OCI-LY7 (cell line): ENCODE measurements at regions of chr3 and their contacts with region 1.

Region 1: GRCh38 chr3:50227390-50228183 is 8.4 kb upstream of the GNAI2 start:
- DNase-seq: peak; percentile 96
- H3K4me3 ChIP-seq: peak overlapping the region; percentile 90
- H3K27ac ChIP-seq: peak overlapping the region; percentile 60
- H3K4me1 ChIP-seq: peaks cover 45% of the 10 kb centered on the region
- CTCF ChIP-seq: peak; percentile 81

Region 2: GRCh38 chr3:49802719-49803464 is 424.7 kb before region 1 on chr3 and contains the start of gene INKA1:
- CTCF ChIA-PET with region 1: no interaction called
- POLR2A ChIA-PET with region 1: no interaction called
- intact Hi-C with region 1: loop called (anchors 10 kb)
- DNase-seq: peak; percentile 93
- H3K4me3 ChIP-seq: peak within 1 kb of the TSS; percentile 82
- H3K27ac ChIP-seq: peak within 1 kb of the TSS; percentile 96
- H3K4me1 ChIP-seq: peaks cover 46% of the 10 kb centered on the region
- CTCF ChIP-seq: peak; percentile 92
- total RNA-seq, gene INKA1: 12.8 and 18.4 TPM in 2 replicates

Region 3: GRCh38 chr3:50192689-50193141 is 34.9 kb before region 1 on chr3:
- CTCF ChIA-PET with region 1: interaction called, 23 read pairs
- POLR2A ChIA-PET with region 1: interaction called, 5 read pairs
- intact Hi-C with region 1: loop called (anchors 1 kb)
- DNase-seq: peak; percentile 79
- H3K4me3 ChIP-seq: no peak overlapping the region
- H3K27ac ChIP-seq: no peak overlapping the region
- H3K4me1 ChIP-seq: peaks cover 19% of the 10 kb centered on the region
- CTCF ChIP-seq: peak; percentile 96

Region 4: DNA sequence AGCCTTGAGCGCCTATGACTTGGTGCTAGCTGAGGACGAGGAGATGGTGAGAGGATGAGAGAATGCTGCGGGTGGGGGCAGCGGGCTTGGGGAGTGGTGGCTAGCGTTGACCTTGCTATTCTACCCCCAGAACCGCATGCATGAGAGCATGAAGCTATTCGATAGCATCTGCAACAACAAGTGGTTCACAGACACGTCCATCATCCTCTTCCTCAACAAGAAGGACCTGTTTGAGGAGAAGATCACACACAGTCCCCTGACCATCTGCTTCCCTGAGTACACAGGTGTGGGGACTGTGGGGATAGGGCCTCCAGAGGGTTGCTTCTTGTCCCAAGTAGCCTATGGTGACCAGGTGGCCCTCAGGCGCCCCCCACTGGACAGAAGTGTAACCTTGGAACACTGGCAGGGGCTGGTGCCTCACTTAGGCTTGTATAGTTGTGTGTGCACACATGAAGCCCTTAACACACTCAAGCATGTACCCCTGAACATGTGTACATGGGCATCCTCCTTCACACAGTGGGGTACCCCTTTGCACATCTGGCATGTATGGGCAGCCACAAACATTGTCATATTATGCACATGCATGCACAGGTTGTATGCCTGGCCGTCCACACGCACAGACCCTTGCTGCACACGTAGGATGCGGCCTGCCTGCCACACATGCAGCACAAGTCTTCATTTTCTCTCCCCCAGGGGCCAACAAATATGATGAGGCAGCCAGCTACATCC is 29.4 kb after region 1 on chr3:
- CTCF ChIA-PET with region 1: interaction called, 3 read pairs
- POLR2A ChIA-PET with region 1: interaction called, 7 read pairs
- intact Hi-C with region 1: loop called (anchors 1 kb)
- DNase-seq: peak; percentile 49
- H3K4me3 ChIP-seq: no peak overlapping the region
- H3K27ac ChIP-seq: no peak overlapping the region
- H3K4me1 ChIP-seq: peaks cover 4% of the 10 kb centered on the region
- CTCF ChIP-seq: peak; percentile 85

Region 5: DNA sequence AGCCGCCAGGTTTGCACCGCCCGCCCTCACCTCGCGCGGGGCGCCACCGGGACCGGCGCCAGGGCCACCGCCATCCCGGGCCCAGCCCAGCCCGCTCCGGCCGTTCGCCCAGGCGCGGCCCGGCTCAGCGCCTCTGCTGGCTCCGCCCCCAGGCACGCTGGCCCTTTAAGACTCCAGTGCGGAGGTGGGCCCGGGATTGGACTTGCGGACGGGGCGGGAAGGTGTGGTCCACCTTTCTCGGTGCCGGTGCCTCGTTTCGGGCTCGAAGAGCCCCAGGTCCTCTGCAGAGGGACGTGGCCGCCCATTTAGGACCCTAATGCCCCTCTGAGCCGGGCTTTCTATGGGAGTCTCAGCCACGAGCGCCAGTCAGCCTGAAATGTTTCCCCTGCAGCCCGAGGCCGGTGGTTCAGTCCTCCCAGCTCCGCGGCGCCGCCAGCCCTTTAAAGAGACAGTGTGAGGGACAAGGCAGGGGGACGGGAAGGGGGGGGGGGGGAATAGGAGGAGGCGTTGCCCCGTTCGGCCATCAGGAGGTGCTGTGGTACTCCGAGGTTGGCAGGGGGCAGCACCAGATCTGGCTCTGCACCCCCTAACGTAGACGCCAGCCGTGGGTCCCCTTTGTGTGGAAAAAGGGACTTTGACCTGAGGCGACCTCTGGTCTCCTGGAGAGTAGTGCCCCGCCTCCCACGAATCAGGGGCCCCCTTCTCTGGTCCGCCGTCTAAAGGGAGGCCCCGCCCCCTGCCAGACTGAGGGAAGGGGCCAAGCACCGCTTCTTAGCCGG is 93.9 kb after region 1 on chr3:
- CTCF ChIA-PET with region 1: no interaction called
- POLR2A ChIA-PET with region 1: no interaction called
- intact Hi-C with region 1: loop called (anchors 5 kb)
- DNase-seq: peak; percentile 92
- H3K4me3 ChIP-seq: peak overlapping the region; percentile 72
- H3K27ac ChIP-seq: peak overlapping the region; percentile 51
- H3K4me1 ChIP-seq: peaks cover 45% of the 10 kb centered on the region
- CTCF ChIP-seq: peak; percentile 75

Region 6: DNA sequence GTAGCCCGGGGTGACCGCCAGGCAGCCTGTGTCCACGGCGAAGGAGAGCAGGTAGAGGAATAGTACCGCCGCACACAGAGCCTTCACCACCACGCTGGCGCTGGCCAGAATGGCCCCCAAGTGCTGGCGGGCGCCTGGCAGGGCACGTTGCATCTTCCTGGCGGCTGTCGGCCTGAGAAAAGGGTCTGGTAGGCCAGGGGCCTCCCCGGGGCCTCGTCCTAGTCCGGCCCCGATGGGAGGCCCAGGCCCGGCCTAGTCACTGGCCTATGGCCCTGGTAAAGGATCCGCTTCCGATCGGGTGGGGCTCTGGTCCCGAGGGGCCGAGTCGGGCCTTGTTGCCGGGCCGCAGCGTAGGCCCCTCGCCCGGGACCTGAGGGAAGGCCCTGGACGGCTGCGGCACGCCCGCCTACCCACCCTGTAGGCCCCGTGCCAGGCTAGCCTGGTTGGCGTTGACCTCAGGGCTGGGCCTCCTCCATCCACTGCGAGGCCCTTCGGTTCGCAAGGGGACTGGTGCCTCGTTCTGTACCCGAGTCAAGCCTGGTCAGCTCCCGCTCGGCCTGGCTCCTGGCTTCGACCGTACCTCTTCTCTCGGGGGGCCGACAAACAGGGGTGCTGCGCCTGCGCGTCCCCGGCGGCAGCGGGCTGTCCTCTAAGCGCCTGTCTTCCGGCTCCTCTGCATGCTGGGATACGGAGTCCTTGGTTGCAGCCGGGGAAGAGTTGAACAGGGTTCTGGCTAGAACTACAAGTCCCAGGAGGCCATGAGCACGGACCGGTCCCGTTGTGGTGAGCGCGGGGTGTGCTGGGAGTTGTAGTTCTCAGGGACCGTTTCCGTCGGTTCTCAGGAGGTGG is 131.5 kb after region 1 on chr3 and contains the start of gene TMEM115:
- CTCF ChIA-PET with region 1: no interaction called
- POLR2A ChIA-PET with region 1: no interaction called
- intact Hi-C with region 1: no loop called
- DNase-seq: peak; percentile 98
- H3K4me3 ChIP-seq: peak within 1 kb of the TSS; percentile 76
- H3K27ac ChIP-seq: no peak within 1 kb of the TSS
- H3K4me1 ChIP-seq: peaks cover 40% of the 10 kb centered on the region
- CTCF ChIP-seq: no peak
- total RNA-seq, gene TMEM115: 14.5 and 18.9 TPM in 2 replicates

Region 7: GRCh38 chr3:50415066-50415465 is 187.5 kb after region 1 on chr3:
- CTCF ChIA-PET with region 1: no interaction called
- POLR2A ChIA-PET with region 1: no interaction called
- intact Hi-C with region 1: no loop called
- DNase-seq: no peak
- H3K4me3 ChIP-seq: no peak overlapping the region
- H3K27ac ChIP-seq: no peak overlapping the region
- H3K4me1 ChIP-seq: no peaks in the 10 kb centered on the region
- CTCF ChIP-seq: no peak; the same call in 1 of the 2 replicates